Naive thymus-derived CD4-positive, alpha-beta T cell (primary cell): ENCODE measurements at regions of chr2 and their contacts with region 1.

Region 1: GRCh38 chr2:189762551-189763298 is at the start of gene OSGEPL1:
- DNase-seq: peak; percentile 72 to 95 (median 88)
- ATAC-seq: peak; percentile 95
- H3K4me3 ChIP-seq: peak within 1 kb of the TSS; percentile 88
- H3K4me3 Mint-ChIP-seq: peak within 1 kb of the TSS; percentile 88 to 98 (median 94)
- H3K27ac ChIP-seq: peak within 1 kb of the TSS; percentile 89
- H3K27ac Mint-ChIP-seq: peak within 1 kb of the TSS; percentile 94 to 98 (median 96)
- H3K4me1 ChIP-seq: peaks cover 6 to 10% of the 10 kb centered on the region in 2 donors
- H3K4me1 Mint-ChIP-seq: peaks cover 4 to 18% (median 9%) of the 10 kb centered on the region in 7 donors
- H3K27me3 ChIP-seq: no peaks in the 10 kb centered on the region
- H3K27me3 Mint-ChIP-seq: no peaks in the 10 kb centered on the region
- total RNA-seq, gene OSGEPL1: 6.8 to 24.2 (median 7.2) TPM

Region 2: GRCh38 chr2:189674374-189675112 is 88.2 kb before region 1 on chr2 and contains the start of gene ANKAR:
- CTCF ChIA-PET with region 1: interaction called, 9 read pairs
- POLR2A ChIA-PET with region 1: interaction called, 6 read pairs
- intact Hi-C with region 1: loop called (anchors 1 kb)
- DNase-seq: peak; percentile 71 to 88 (median 84)
- ATAC-seq: peak; percentile 98
- H3K4me3 ChIP-seq: peak within 1 kb of the TSS; percentile 62
- H3K4me3 Mint-ChIP-seq: peak within 1 kb of the TSS; percentile 88 to 96 (median 95)
- H3K27ac ChIP-seq: peak within 1 kb of the TSS; percentile 86
- H3K27ac Mint-ChIP-seq: peak within 1 kb of the TSS; percentile 96 to 99 (median 97)
- H3K4me1 ChIP-seq: peaks cover 9 to 12% of the 10 kb centered on the region in 2 donors
- H3K4me1 Mint-ChIP-seq: peaks cover 17 to 49% (median 40%) of the 10 kb centered on the region in 7 donors
- H3K27me3 ChIP-seq: no peaks in the 10 kb centered on the region
- H3K27me3 Mint-ChIP-seq: no peaks in the 10 kb centered on the region
- total RNA-seq, gene ANKAR: 4.3 to 17.9 (median 10.3) TPM

Region 3: GRCh38 chr2:189698020-189698887 is 64.5 kb before region 1 on chr2:
- CTCF ChIA-PET with region 1: interaction called, 4 read pairs
- POLR2A ChIA-PET with region 1: no interaction called
- intact Hi-C with region 1: loop called in 1 of 2 experiments (anchors 1 kb)
- DNase-seq: peak in 7 of 9 donors; percentile 25 to 55 (median 51)
- ATAC-seq: peak; percentile 84
- H3K4me3 ChIP-seq: no peak overlapping the region
- H3K4me3 Mint-ChIP-seq: peak overlapping the region in 6 of 10 donors; percentile 2 to 44 (median 21)
- H3K27ac ChIP-seq: no peak overlapping the region
- H3K27ac Mint-ChIP-seq: peak overlapping the region in 4 of 9 donors; percentile 15 to 72 (median 49)
- H3K4me1 ChIP-seq: no peaks in the 10 kb centered on the region
- H3K4me1 Mint-ChIP-seq: peaks cover 0 to 8% (median 4%) of the 10 kb centered on the region in 7 donors
- H3K27me3 ChIP-seq: no peaks in the 10 kb centered on the region
- H3K27me3 Mint-ChIP-seq: no peaks in the 10 kb centered on the region

Region 4: GRCh38 chr2:189751080-189751658 is 11.6 kb before region 1 on chr2:
- CTCF ChIA-PET with region 1: interaction called, 19 read pairs
- POLR2A ChIA-PET with region 1: interaction called, 18 read pairs
- intact Hi-C with region 1: loop called (anchors 1 kb)
- DNase-seq: peak in 7 of 9 donors; percentile 26 to 63 (median 49)
- ATAC-seq: peak; percentile 87
- H3K4me3 ChIP-seq: no peak overlapping the region
- H3K4me3 Mint-ChIP-seq: no peak overlapping the region
- H3K27ac ChIP-seq: no peak overlapping the region
- H3K27ac Mint-ChIP-seq: peak overlapping the region in 1 of 9 donors; percentile 1
- H3K4me1 ChIP-seq: no peaks in the 10 kb centered on the region
- H3K4me1 Mint-ChIP-seq: peaks cover 0 to 4% (median 0%) of the 10 kb centered on the region in 7 donors
- H3K27me3 ChIP-seq: no peaks in the 10 kb centered on the region
- H3K27me3 Mint-ChIP-seq: no peaks in the 10 kb centered on the region

Region 5: GRCh38 chr2:189783927-189784867 is 21.5 kb after region 1 on chr2 and contains the starts of genes ORMDL1 and PMS1:
- CTCF ChIA-PET with region 1: interaction called, 7 read pairs
- POLR2A ChIA-PET with region 1: interaction called, 67 read pairs
- intact Hi-C with region 1: loop called (anchors 1 kb)
- DNase-seq: peak; percentile 90 to 96 (median 94)
- ATAC-seq: peak; percentile 95
- H3K4me3 ChIP-seq: peak within 1 kb of the TSS; percentile 76
- H3K4me3 Mint-ChIP-seq: peak within 1 kb of the TSS; percentile 86 to 97 (median 94)
- H3K27ac ChIP-seq: peak within 1 kb of the TSS; percentile 92
- H3K27ac Mint-ChIP-seq: peak within 1 kb of the TSS; percentile 89 to 97 (median 95)
- H3K4me1 ChIP-seq: peaks cover 21 to 24% of the 10 kb centered on the region in 2 donors
- H3K4me1 Mint-ChIP-seq: peaks cover 26 to 72% (median 57%) of the 10 kb centered on the region in 7 donors
- H3K27me3 ChIP-seq: no peaks in the 10 kb centered on the region
- H3K27me3 Mint-ChIP-seq: no peaks in the 10 kb centered on the region
- total RNA-seq, gene ORMDL1: 80.1 to 208 (median 142) TPM
- total RNA-seq, gene PMS1: 18.2 to 30.1 (median 22.5) TPM

Region 6: DNA sequence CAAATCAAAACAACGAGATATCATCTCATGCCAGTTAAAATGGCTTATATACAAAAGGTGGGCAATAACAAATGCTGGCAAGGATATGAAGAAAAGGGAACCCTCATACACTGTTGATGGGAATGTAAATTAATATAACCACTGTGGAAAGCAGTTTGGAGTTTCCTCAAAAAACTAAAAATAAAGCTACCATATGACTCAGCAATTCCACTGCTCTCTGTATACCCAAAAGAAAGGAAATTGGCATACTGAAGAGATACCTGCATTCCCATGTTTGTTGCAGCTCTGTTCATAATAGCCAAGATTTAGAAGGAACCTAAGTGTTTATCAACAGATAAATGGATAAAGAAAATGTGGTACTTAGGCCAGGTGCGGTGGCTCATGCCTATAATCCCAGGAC is 175.0 kb after region 1 on chr2:
- CTCF ChIA-PET with region 1: no interaction called
- POLR2A ChIA-PET with region 1: no interaction called
- intact Hi-C with region 1: no loop called
- DNase-seq: no peak
- ATAC-seq: no peak
- H3K4me3 ChIP-seq: no peak overlapping the region
- H3K4me3 Mint-ChIP-seq: no peak overlapping the region
- H3K27ac ChIP-seq: no peak overlapping the region
- H3K27ac Mint-ChIP-seq: no peak overlapping the region
- H3K4me1 ChIP-seq: no peaks in the 10 kb centered on the region
- H3K4me1 Mint-ChIP-seq: no peaks in the 10 kb centered on the region
- H3K27me3 ChIP-seq: no peaks in the 10 kb centered on the region
- H3K27me3 Mint-ChIP-seq: peaks cover 0 to 19% (median 9%) of the 10 kb centered on the region in 5 donors

Region 7: DNA sequence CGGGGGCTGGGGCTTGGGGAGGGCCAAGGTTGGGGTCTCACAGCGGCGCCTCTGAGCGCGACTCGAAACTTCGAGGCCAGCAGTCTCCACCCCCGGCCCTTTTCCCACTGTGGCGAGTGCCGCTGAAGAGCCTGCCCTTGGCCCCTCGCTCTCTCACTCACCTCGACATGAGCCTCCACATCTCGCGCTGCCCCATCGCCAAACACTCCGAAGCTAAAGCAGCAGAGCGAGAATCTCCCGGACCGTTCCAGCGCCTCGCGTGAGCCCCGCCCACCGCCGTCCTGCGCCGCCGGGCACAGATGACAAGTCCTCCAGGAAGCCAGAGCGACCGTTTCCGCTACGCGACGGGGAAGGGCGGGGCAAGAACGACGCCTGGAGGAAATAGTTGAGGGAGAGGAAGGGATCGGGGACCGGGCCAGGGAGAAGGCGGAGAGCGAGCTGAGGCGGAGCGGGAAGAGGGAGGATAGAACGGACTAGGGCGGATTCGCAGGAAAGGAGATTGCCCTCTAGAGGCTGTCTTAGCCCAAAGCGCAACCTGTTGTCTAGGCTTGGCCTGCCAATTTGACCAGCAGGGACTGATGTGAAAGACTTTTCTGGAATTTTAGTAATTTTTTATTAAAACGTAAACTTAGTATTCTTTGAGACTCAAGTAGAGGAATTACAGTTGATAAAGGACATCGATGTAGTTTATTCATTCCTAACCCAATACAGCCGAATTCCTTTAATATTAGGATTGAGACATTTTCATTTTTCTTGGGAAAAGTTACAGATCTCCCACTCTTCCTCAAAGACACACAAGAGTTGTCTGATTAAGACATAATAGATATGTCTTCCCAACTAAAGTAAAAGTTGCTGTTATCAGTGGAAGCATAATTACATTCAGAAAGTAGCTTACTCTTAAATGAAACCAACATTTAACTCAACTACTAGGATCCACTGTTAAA is 557.1 kb after region 1 on chr2 and contains the start of gene HIBCH:
- CTCF ChIA-PET with region 1: no interaction called
- POLR2A ChIA-PET with region 1: no interaction called
- intact Hi-C with region 1: loop called (anchors 2 to 5 kb)
- DNase-seq: peak; percentile 56 to 88 (median 68)
- ATAC-seq: peak; percentile 94
- H3K4me3 ChIP-seq: peak within 1 kb of the TSS; percentile 83
- H3K4me3 Mint-ChIP-seq: peak within 1 kb of the TSS; percentile 85 to 100 (median 97)
- H3K27ac ChIP-seq: peak within 1 kb of the TSS; percentile 82
- H3K27ac Mint-ChIP-seq: peak within 1 kb of the TSS; percentile 91 to 99 (median 95)
- H3K4me1 ChIP-seq: peaks cover 8 to 13% of the 10 kb centered on the region in 2 donors
- H3K4me1 Mint-ChIP-seq: peaks cover 27 to 54% (median 48%) of the 10 kb centered on the region in 7 donors
- H3K27me3 ChIP-seq: no peaks in the 10 kb centered on the region
- H3K27me3 Mint-ChIP-seq: no peaks in the 10 kb centered on the region
- total RNA-seq, gene HIBCH: 11.3 to 25.0 (median 21.6) TPM

Region 8: DNA sequence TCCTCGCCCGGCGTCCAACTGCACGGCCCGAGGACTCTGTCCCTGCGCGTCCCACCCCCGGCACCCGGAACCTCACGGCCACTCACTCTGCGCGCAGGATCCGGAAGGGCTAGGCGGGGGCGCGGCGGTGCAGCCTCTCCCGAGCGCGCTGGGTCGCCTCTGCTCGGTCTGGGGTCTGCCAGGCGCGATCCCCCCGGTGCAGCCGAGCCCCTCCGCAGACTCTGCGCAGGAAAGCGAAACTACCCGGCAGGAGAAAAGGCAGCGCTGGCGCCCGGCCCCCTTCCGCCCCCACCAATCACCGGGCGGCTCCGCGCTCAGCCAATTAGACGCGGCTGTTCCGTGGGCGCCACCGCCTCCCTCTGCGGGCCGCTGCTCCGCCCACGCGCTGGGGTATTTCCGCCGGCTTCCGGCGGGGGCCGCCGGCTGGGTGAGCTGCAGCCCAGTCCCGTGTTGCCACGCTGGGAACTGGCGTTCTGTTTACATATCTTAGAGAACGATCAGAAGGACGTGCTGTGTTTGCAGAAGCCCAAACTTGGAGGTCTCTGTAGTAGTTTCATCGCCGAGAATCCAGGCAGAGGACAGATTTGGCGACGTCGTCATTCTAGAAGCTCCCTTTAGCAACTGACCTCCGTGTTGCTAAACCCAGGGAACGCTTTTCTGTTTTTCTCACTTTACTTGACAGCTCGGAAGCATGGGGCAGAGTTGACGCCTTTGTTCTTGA is 1251.4 kb after region 1 on chr2 and contains the start of gene STAT1:
- CTCF ChIA-PET with region 1: no interaction called
- POLR2A ChIA-PET with region 1: no interaction called
- intact Hi-C with region 1: loop called in 1 of 2 experiments (anchors 5 kb)
- DNase-seq: peak; percentile 93 to 99 (median 97)
- ATAC-seq: peak; percentile 97
- H3K4me3 ChIP-seq: peak within 1 kb of the TSS; percentile 69
- H3K4me3 Mint-ChIP-seq: no peak within 1 kb of the TSS
- H3K27ac ChIP-seq: peak within 1 kb of the TSS; percentile 87
- H3K27ac Mint-ChIP-seq: no peak within 1 kb of the TSS
- H3K4me1 ChIP-seq: peaks cover 41 to 48% of the 10 kb centered on the region in 2 donors
- H3K4me1 Mint-ChIP-seq: peaks cover 23 to 51% (median 42%) of the 10 kb centered on the region in 7 donors
- H3K27me3 ChIP-seq: no peaks in the 10 kb centered on the region
- H3K27me3 Mint-ChIP-seq: no peaks in the 10 kb centered on the region
- total RNA-seq, gene STAT1: 74.1 to 1,177 (median 89.6) TPM